ENCODE measurements at regions of chr13 and their contacts with region 1.

Region 1: DNA sequence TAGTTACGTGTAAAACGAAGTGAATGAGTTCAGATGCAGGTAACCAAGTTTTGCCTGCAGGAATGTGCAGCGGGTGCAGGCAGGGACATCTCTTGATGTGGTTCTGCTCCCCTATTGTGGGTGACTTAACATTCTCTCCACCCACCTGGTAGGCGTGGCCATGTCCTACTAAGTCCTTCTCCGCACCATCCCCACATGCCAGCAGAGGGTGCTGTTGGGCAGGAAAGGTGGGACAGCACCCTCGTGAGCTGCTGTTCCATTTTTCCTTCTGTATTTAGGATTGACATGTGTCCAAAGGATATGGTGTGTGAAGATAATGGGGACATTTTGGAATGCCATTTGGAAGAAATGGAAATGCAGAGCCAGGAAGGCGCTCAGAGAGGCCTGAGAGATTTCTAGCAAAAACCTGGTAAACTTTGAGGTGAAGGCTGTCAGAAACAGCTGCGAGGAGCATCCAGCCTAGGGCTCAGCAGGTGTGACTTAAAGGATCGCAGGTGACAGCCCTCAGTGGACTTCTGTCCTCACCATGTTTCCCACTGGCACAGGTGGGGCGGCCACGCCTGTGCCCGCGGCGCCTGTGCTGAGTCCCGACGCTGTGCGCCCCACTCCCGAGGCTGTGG is 26.2 kb upstream of the MCF2L start:
- DNase-seq: peak; percentile 98
- H3K4me3 ChIP-seq: peak overlapping the region; percentile 54 to 63 (median 60)
- H3K27ac ChIP-seq: peak overlapping the region; percentile 49 to 73 (median 62)
- H3K4me1 ChIP-seq: peaks cover 8 to 19% (median 17%) of the 10 kb centered on the region in 4 donors
- H3K27me3 ChIP-seq: peaks cover 0 to 6% (median 0%) of the 10 kb centered on the region in 4 donors
- CTCF ChIP-seq: peak; percentile 91 to 96 (median 94)
- EP300 ChIP-seq: no peak
- POLR2A ChIP-seq: no peak

Region 2: GRCh38 chr13:113029487-113030258 is 86.9 kb after region 1 on chr13:
- intact Hi-C with region 1: loop called (anchors 5 kb)
- DNase-seq: no peak
- H3K4me3 ChIP-seq: no peak overlapping the region
- H3K27ac ChIP-seq: no peak overlapping the region
- H3K4me1 ChIP-seq: peaks cover 0 to 1% (median under 1%) of the 10 kb centered on the region in 4 donors
- H3K27me3 ChIP-seq: peaks cover 0 to 39% (median 0%) of the 10 kb centered on the region in 4 donors
- CTCF ChIP-seq: peak; percentile 44 to 66 (median 49)
- EP300 ChIP-seq: no peak
- POLR2A ChIP-seq: no peak

Region 3: DNA sequence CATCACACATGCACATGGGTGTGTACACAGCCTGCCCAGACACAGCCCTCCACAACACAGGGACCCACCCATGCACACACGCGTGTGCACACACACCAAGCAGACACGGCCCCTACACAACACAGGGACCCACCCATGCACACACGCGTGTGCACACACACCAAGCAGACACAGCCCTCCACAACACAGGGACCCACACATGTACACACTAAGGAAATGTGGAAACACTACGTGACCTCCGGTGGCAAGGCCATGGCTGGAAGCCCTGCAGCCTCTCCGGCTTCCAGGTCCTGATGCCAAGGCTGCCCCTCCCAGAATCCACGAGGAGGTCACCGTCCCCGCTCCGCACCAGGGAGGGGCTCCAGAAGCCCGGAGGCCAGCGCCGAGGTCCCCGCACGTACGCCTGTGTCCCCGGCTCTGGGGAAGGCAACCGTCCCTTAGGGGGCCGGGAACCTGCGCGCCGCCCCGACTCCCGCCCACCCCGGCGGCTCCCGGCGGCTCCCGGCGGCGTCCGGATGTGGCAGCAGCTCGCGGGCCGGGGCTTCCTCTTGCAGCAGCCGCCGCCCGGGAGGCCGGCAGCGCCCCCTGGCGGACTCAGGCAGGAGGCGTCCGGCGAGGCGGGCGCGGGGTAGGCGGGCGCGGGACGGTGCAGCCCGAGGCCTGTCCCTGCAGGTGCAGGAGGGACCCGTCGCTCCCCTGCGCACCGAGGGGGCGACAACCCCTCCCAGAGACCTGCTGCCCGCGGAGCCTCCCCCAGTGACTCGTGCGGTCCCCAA is 451.0 kb after region 1 on chr13:
- intact Hi-C with region 1: loop called (anchors 2 kb)
- DNase-seq: no peak
- H3K4me3 ChIP-seq: peak overlapping the region; percentile 70 to 87 (median 79)
- H3K27ac ChIP-seq: peak overlapping the region; percentile 30 to 67 (median 59)
- H3K4me1 ChIP-seq: peaks cover 14 to 25% (median 16%) of the 10 kb centered on the region in 4 donors
- H3K27me3 ChIP-seq: no peaks in the 10 kb centered on the region
- CTCF ChIP-seq: peak; percentile 91 to 99 (median 98)
- EP300 ChIP-seq: no peak
- POLR2A ChIP-seq: no peak